Prostate gland (tissue), 2 donors: ENCODE measurements at regions of chr11 and their contacts with region 1.

Region 1: GRCh38 chr11:70467201-70468085 is 69.1 kb downstream of the CTTN start:
- DNase-seq: peak; percentile 50
- H3K4me3 ChIP-seq: no peak overlapping the region
- H3K27ac ChIP-seq: no peak overlapping the region
- H3K4me1 ChIP-seq: no peaks in the 10 kb centered on the region
- H3K27me3 ChIP-seq: no peaks in the 10 kb centered on the region
- CTCF ChIP-seq: peak; percentile 71 to 90 (median 84)
- POLR2A ChIP-seq: no peak

Region 2: DNA sequence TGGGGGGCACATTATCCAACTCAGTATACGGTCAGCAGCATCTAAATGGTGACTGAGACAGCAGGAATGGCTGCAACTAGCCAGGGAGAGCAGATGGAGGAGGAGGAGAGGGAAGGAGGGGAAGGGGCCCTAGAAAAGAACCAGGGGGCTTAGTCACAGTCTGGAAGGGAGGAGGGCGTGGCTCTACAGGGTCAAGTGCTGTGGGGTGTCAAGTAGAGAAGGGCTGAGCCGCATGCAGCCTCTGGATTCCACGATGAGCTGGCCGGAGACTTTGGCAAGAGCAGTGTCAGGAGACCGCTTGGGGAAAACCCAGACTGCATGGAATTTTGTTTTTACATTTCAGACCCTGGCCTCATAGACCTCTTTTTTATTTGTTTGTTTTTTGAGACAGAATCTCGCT is 222.7 kb before region 1 on chr11:
- intact Hi-C with region 1: no loop called
- DNase-seq: no peak
- H3K4me3 ChIP-seq: no peak overlapping the region
- H3K27ac ChIP-seq: no peak overlapping the region
- H3K4me1 ChIP-seq: no peaks in the 10 kb centered on the region
- H3K27me3 ChIP-seq: no peaks in the 10 kb centered on the region
- CTCF ChIP-seq: no peak
- POLR2A ChIP-seq: no peak

Region 3: DNA sequence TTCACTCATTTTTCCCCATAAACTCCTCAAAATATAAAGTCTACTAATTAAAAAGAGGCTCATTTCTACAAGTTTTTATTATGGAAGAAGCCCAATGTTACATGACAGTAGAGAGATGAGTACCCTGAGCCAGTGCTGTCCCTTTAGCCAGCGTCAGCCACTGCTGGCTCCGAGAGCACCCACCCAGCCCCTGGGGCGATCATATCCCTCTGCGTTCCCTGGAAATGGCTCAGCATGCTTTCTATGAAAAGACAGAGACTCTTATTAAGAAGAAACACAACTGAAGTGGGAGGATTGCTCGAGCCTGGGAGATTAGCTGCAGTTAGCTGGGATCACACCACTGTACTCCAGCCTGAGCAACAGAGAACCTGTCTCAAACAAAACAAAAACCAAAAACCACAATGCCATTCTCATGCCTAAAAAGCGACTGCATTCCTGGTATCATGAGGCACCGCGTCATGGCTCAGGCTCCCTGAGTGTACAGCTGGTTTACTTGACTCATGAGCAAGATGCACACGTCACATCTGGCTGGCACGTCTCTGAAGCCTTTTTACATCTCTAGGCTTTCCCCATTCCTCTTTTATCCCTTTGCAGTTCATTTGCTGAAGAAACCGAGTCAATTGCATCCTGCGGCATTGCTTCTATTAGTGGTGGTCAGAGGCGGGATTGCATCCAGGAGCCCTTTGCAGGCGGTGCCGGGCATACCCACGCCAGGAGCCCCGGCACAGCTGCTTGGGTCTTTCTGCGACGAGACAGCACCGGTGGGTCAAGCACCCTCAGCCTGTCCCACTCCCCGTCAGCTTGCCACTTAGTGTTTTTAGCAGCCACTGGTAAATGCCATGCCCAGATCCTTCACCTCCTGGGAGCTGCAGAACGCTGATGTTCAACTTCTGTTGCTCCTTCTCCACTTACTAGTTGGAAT is 50.8 kb after region 1 on chr11:
- intact Hi-C with region 1: no loop called
- DNase-seq: no peak
- H3K4me3 ChIP-seq: no peak overlapping the region
- H3K27ac ChIP-seq: no peak overlapping the region
- H3K4me1 ChIP-seq: no peaks in the 10 kb centered on the region
- H3K27me3 ChIP-seq: no peaks in the 10 kb centered on the region
- CTCF ChIP-seq: no peak
- POLR2A ChIP-seq: no peak

Region 4: GRCh38 chr11:70755410-70756161 is 288.1 kb after region 1 on chr11:
- intact Hi-C with region 1: loop called (anchors 2 kb)
- DNase-seq: peak; percentile 73
- H3K4me3 ChIP-seq: no peak overlapping the region
- H3K27ac ChIP-seq: no peak overlapping the region
- H3K4me1 ChIP-seq: no peaks in the 10 kb centered on the region
- H3K27me3 ChIP-seq: no peaks in the 10 kb centered on the region
- CTCF ChIP-seq: peak; percentile 71 to 99 (median 95)
- POLR2A ChIP-seq: no peak